ENCODE measurements at regions of chr17 and their contacts with region 1.

Region 1: DNA sequence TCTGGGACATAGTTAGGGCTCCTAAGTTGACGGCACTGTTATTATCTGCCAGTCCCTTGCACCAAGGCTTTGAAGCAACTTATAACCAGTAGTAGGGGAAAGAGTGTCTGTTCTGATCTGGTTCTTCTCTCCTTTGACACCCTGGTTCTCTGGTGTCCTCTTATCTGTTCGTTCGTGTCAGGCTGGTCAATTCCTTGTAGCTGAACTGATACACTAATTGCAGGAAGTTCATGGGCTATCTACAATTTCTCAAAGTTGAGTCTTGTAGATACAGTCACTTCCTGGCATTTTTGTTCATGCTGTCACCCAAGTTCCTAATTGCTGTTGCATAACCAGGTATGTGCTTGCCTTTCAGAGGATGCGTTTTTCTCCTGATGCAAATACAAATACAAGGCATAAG is 17.3 kb upstream of the MYO1D start:
- DNase-seq: no peak
- ATAC-seq: no peak
- H3K4me3 Mint-ChIP-seq: no peak overlapping the region
- H3K27ac Mint-ChIP-seq: no peak overlapping the region
- H3K4me1 Mint-ChIP-seq: no peaks in the 10 kb centered on the region
- H3K27me3 Mint-ChIP-seq: peaks cover 11% of the 10 kb centered on the region

Region 2: GRCh38 chr17:32777436-32777835 is 116.8 kb before region 1 on chr17:
- CTCF ChIA-PET with region 1: no interaction called
- POLR2A ChIA-PET with region 1: no interaction called
- intact Hi-C with region 1: loop called in 1 of 2 experiments (anchors 5 kb)
- DNase-seq: no peak
- ATAC-seq: no peak
- H3K4me3 Mint-ChIP-seq: no peak overlapping the region
- H3K27ac Mint-ChIP-seq: no peak overlapping the region
- H3K4me1 Mint-ChIP-seq: no peaks in the 10 kb centered on the region
- H3K27me3 Mint-ChIP-seq: no peaks in the 10 kb centered on the region

Region 3: GRCh38 chr17:32917081-32917480 is 22.8 kb after region 1 on chr17:
- CTCF ChIA-PET with region 1: no interaction called
- POLR2A ChIA-PET with region 1: no interaction called
- intact Hi-C with region 1: no loop called
- DNase-seq: no peak
- ATAC-seq: no peak
- H3K4me3 Mint-ChIP-seq: no peak overlapping the region
- H3K27ac Mint-ChIP-seq: no peak overlapping the region
- H3K4me1 Mint-ChIP-seq: peaks cover 17% of the 10 kb centered on the region
- H3K27me3 Mint-ChIP-seq: peaks cover 6% of the 10 kb centered on the region

Measured in activated CD4-positive, alpha-beta T cell treated with anti-CD3 and anti-CD28 coated beads for 36 hours (primary cell).